HepG2 (cell line): ENCODE measurements at regions of chr3 and their contacts with region 1.

Region 1: DNA sequence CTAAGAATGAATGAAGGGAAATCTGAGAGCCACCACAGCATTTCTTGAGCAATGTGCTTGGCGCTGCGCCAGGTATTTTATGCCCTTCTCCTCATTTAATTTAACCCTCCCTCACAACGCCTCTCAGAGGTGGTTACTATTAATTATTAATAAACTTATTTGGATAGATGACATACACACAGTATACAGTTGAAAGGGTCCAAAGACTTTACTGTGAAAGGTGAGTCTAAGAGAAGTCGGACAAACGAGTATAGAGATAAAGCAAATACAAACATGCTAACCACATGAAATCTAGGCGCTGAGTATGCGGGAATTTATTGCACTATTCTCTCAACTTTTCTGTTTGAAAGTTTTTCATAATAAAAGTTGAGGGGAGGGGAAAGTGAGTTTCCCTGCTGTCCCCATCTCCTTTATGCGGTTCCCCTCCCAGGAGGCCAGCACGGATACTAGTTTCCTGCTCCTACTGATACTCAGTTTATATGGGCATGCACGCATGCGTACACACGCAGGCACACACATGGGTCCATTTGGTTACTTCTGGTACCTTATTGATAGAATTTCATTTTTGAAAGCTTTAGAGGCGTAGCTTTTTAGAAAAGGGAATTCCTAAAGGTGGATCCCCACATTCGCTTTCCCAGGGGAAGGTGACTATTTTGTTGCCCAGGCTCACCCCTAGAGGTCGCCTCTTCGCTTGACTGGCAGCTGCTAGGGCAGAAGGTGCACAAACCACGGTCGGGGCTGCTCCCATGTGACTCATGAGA is 28.5 kb upstream of the KCTD6 start:
- DNase-seq: peak; percentile 70
- ATAC-seq: peak; percentile 95
- H3K4me3 ChIP-seq: peak overlapping the region; percentile 44 to 55 (median 54)
- H3K27ac ChIP-seq: peak overlapping the region; percentile 82
- H3K4me1 ChIP-seq: peaks cover 29% of the 10 kb centered on the region
- H3K27me3 ChIP-seq: no peaks in the 10 kb centered on the region
- CTCF ChIP-seq: peak; percentile 95
- EP300 ChIP-seq: no peak
- POLR2A ChIP-seq: 0 out of 4 replicates have a peak, but pooled peaks of 1 of the 2 experiments have one; percentile 50
- RAD21 ChIP-seq: peak; percentile 84

Region 2: GRCh38 chr3:58452176-58452575 is 11.2 kb before region 1 on chr3:
- CTCF ChIA-PET with region 1: no interaction called
- POLR2A ChIA-PET with region 1: interaction called, 4 read pairs
- in situ Hi-C with region 1: no loop called
- intact Hi-C with region 1: loop called (anchors 1 kb)
- DNase-seq: peak; percentile 95
- ATAC-seq: peak; percentile 99
- H3K4me3 ChIP-seq: peak overlapping the region in 1 of 3 experiments; percentile 2; a peak in 1 of 6 replicates
- H3K27ac ChIP-seq: peak overlapping the region; percentile 83
- H3K4me1 ChIP-seq: peaks cover 34% of the 10 kb centered on the region
- H3K27me3 ChIP-seq: no peaks in the 10 kb centered on the region
- CTCF ChIP-seq: 0 out of 2 replicates have a peak, but pooled peaks have one; percentile 12
- EP300 ChIP-seq: peak; percentile 73 to 95; a peak in 3 of 4 replicates
- POLR2A ChIP-seq: peak; percentile 27 to 31; a peak in 1 of 4 replicates
- RAD21 ChIP-seq: no peak

Region 3: GRCh38 chr3:58520403-58521335 is 57.3 kb after region 1 on chr3:
- CTCF ChIA-PET with region 1: interaction called, 3 read pairs
- POLR2A ChIA-PET with region 1: interaction called, 5 read pairs
- in situ Hi-C with region 1: no loop called
- intact Hi-C with region 1: loop called (anchors 2 kb)
- DNase-seq: peak; percentile 81
- ATAC-seq: peak; percentile 78
- H3K4me3 ChIP-seq: peak overlapping the region in 2 of 3 experiments; percentile 15 to 17; a peak in 2 of 6 replicates
- H3K27ac ChIP-seq: peak overlapping the region; percentile 88
- H3K4me1 ChIP-seq: peaks cover 91% of the 10 kb centered on the region
- H3K27me3 ChIP-seq: no peaks in the 10 kb centered on the region
- CTCF ChIP-seq: peak; percentile 73
- EP300 ChIP-seq: 0 out of 4 replicates have a peak, but pooled peaks of 1 of the 2 experiments have one; percentile 42
- POLR2A ChIP-seq: peak in 1 of 2 experiments; percentile 22; a peak in 1 of 4 replicates
- RAD21 ChIP-seq: peak; percentile 58